Activated naive CD4-positive, alpha-beta T cell treated with anti-CD3 and anti-CD28 coated beads for 36 hours (primary cell): ENCODE measurements at regions of chr10 and their contacts with region 1.

Region 1: DNA sequence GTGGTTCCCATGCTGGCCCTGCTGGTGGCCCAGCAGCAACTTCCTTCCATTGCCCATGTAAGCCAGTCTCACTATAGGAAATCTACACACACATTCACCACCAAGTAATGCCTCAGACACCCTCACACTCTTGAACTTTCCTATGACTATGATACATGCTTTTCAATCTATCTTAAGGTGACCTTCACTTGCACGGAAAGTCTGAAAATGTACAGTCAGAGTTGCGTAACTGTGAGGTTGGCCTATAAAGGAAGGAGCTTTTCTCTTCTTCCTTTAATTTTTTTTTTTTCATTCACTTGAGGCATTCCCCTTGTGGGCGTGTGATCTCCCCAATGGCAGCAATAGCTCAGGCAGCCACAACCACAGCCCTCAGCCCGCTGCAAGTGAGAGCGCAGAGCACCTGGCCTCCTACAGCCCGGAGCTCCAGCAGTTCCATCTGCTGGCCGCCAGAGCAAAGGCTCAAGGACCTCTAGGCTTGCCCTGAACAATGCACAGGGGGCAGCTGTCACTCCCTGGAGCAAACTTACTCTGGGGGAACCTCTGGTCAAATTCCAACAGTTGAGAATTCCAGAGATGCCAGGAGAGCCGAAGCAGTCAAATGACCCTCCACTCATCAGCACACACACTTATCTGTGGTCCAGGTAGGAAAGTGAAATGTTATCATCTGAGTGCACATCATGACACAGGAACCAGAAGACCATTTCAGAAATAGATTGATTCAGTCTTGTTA is 123.1 kb upstream of the ADO start:
- DNase-seq: peak; percentile 93
- H3K4me3 Mint-ChIP-seq: no peak overlapping the region
- H3K27ac Mint-ChIP-seq: peak overlapping the region; percentile 72
- H3K4me1 Mint-ChIP-seq: peaks cover 33% of the 10 kb centered on the region
- H3K27me3 Mint-ChIP-seq: no peaks in the 10 kb centered on the region

Region 2: DNA sequence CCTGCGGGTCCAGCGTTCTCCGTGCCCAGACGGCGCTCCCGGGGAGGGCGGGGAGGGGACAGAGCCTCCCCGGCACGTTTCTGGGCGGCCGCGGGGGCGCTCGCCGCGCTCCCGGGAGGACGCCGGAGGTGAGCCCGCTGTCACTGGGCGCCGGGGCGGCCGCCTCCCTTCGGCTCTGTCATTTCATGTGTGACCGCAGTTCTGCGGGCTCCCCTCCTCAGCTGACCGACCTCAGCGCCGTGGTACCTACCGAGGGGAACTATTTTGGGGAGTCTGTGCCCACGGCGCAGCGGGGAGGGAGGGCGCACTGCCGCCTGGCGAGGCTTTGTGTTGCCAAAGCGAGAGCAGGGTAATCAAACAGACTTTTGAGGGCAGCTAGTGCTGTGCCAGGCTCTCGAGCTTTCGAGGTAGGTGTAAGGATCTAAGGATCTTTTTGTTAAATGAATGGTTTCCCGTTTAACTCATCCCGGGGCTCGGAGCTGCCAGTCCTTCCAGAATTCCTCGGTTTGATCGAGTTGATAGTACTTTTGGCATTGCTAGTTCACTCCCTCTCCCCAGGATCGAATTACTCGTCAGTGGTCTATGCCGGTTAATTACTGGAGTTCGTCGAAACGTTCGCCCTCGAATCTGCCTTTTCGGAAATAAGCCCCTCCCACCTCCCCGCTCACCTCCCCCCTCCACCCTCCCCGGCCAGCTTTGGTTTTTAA is 778.0 kb before region 1 on chr10:
- CTCF ChIA-PET with region 1: no interaction called
- intact Hi-C with region 1: loop called (anchors 5 kb)
- DNase-seq: peak; percentile 74
- H3K4me3 Mint-ChIP-seq: peak overlapping the region; percentile 99
- H3K27ac Mint-ChIP-seq: peak overlapping the region; percentile 100
- H3K4me1 Mint-ChIP-seq: peaks cover 42% of the 10 kb centered on the region
- H3K27me3 Mint-ChIP-seq: no peaks in the 10 kb centered on the region

Region 3: GRCh38 chr10:62437696-62438095 is 243.7 kb before region 1 on chr10:
- CTCF ChIA-PET with region 1: no interaction called
- intact Hi-C with region 1: loop called (anchors 2 kb)
- DNase-seq: no peak
- H3K4me3 Mint-ChIP-seq: no peak overlapping the region
- H3K27ac Mint-ChIP-seq: no peak overlapping the region
- H3K4me1 Mint-ChIP-seq: peaks cover 19% of the 10 kb centered on the region
- H3K27me3 Mint-ChIP-seq: peaks cover 10% of the 10 kb centered on the region

Region 4: DNA sequence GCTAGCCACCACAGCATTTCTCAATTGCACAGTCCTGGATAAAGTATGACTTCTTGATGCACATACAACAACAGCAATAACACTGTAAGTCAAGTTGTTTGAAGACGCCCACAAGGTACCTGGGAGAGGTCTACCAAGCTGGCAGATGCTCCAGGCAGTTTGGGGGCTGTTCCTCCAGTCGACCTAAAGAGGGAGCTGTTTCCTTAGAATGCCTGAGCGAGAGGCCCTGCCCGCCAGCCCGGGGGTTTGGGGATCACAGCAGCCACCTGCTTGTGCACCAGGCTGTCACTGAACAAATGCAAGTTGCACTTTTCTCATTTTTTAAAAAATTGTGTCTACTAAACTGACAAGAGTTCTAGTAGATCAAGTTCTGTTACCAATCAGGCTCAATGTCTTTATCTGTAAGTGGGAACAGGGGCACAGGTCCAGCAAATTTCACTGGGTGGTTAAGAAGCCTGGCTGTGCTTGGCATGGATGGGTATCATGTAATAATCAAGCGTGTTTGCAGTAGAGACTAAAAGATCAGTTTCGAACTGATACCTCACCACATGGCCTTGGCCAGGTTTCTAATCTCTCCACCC is 70.6 kb before region 1 on chr10:
- CTCF ChIA-PET with region 1: interaction called, 17 read pairs
- intact Hi-C with region 1: loop called (anchors 1 kb)
- DNase-seq: peak; percentile 83
- H3K4me3 Mint-ChIP-seq: no peak overlapping the region
- H3K27ac Mint-ChIP-seq: no peak overlapping the region
- H3K4me1 Mint-ChIP-seq: peaks cover 31% of the 10 kb centered on the region
- H3K27me3 Mint-ChIP-seq: peaks cover 5% of the 10 kb centered on the region

Region 5: DNA sequence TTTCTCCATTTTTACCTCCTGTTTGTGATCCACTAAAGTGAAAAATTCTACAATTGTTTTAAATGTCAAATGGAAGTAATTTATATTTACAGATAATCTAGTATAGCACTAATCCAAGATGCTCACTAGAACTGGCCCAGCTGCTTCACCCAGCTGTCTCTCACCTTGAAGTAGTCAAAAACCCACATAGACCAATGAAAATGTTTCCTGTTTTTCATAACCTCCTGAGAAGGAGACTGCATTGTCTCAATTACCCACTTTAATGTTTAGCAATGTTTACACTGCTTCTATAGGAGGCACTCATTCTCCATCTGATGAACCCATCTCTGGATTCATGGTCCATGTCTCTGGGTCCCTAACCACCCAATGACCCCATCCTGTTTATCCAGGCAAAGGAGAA is 67.0 kb after region 1 on chr10:
- CTCF ChIA-PET with region 1: interaction called, 8 read pairs
- intact Hi-C with region 1: loop called (anchors 1 kb)
- DNase-seq: no peak
- H3K4me3 Mint-ChIP-seq: no peak overlapping the region
- H3K27ac Mint-ChIP-seq: no peak overlapping the region
- H3K4me1 Mint-ChIP-seq: peaks cover 26% of the 10 kb centered on the region
- H3K27me3 Mint-ChIP-seq: no peaks in the 10 kb centered on the region

Region 6: GRCh38 chr10:62811159-62811875 is 129.9 kb after region 1 on chr10:
- CTCF ChIA-PET with region 1: interaction called, 6 read pairs
- intact Hi-C with region 1: loop called (anchors 1 kb)
- DNase-seq: peak; percentile 91
- H3K4me3 Mint-ChIP-seq: peak overlapping the region; percentile 30
- H3K27ac Mint-ChIP-seq: peak overlapping the region; percentile 79
- H3K4me1 Mint-ChIP-seq: peaks cover 78% of the 10 kb centered on the region
- H3K27me3 Mint-ChIP-seq: no peaks in the 10 kb centered on the region

Region 7: GRCh38 chr10:62992145-62992721 is 310.9 kb after region 1 on chr10:
- CTCF ChIA-PET with region 1: no interaction called
- intact Hi-C with region 1: loop called (anchors 2 kb)
- DNase-seq: peak; percentile 24
- H3K4me3 Mint-ChIP-seq: peak overlapping the region; percentile 1
- H3K27ac Mint-ChIP-seq: peak overlapping the region; percentile 71
- H3K4me1 Mint-ChIP-seq: peaks cover 43% of the 10 kb centered on the region
- H3K27me3 Mint-ChIP-seq: peaks cover 3% of the 10 kb centered on the region